Mammary epithelial cell (primary cell): ENCODE measurements at regions of chr1 and their contacts with region 1.

Region 1: DNA sequence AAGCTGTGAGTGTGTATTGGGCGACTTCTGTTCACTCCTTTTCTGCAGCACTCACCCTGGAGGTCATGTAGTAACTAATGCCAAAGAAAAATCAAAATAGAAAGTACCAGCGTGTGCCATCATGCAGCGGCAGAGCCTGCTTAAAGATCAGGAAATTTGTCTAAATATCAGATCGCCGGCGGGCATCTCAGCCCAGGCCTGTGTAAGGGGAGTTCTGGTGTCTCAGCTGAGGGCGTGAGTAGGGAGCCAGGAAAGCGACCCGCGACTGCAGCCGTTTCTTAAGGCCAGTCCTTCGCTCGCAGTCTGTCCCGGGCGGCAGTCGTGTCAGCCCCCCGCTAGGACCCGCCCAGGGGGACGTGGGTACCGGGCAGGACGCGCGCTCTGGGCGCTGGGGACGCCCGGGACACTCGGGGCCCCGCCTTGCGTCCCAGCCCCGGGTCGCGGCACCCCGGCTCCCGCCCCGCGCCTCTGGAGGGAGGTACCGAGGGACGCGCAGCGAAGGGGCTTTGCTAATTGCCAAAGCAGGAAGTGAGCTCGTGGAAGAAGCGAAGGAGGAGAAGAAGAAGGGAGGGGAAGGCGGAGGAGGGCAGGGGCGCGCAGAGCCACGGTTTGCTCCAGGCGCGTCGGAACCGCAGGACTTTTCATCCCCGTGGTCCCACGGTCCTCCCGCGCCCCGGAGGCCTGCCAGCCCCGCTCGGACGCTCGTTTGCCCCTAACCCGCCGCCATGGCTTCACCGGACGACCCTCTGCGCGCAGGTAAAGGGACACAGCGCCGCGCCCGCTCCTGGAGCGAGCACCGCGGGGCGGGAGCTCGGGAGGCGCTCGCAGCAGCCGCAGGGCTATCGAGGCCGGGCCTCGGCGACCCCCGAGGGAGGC is 1.1 kb downstream of the EDARADD start:
- DNase-seq: peak; percentile 72
- H3K4me3 ChIP-seq: peak overlapping the region; percentile 90 to 95 (median 94)
- H3K27ac ChIP-seq: peak overlapping the region; percentile 28
- H3K4me1 ChIP-seq: peaks cover 12% of the 10 kb centered on the region
- H3K27me3 ChIP-seq: no peaks in the 10 kb centered on the region
- CTCF ChIP-seq: no peak

Region 2: GRCh38 chr1:236142253-236143103 is 252.7 kb before region 1 on chr1 and contains the start of gene GPR137B:
- CTCF ChIA-PET with region 1: no interaction called
- dilution Hi-C with region 1: no loop called
- in situ Hi-C with region 1: no loop called
- intact Hi-C with region 1: loop called (anchors 5 kb)
- DNase-seq: peak; percentile 43
- H3K4me3 ChIP-seq: peak within 1 kb of the TSS; percentile 85 to 98 (median 88)
- H3K27ac ChIP-seq: peak within 1 kb of the TSS; percentile 45
- H3K4me1 ChIP-seq: peaks cover 22% of the 10 kb centered on the region
- H3K27me3 ChIP-seq: no peaks in the 10 kb centered on the region
- CTCF ChIP-seq: no peak
- total RNA-seq, gene GPR137B: 10.2 to 24.7 TPM

Region 3: GRCh38 chr1:236281654-236282424 is 113.3 kb before region 1 on chr1 and contains the start of gene ERO1B:
- CTCF ChIA-PET with region 1: no interaction called
- dilution Hi-C with region 1: no loop called
- in situ Hi-C with region 1: no loop called
- intact Hi-C with region 1: loop called (anchors 1 kb)
- DNase-seq: peak; percentile 93
- H3K4me3 ChIP-seq: peak within 1 kb of the TSS; percentile 54 to 90 (median 74)
- H3K27ac ChIP-seq: peak within 1 kb of the TSS; percentile 25
- H3K4me1 ChIP-seq: peaks cover 4% of the 10 kb centered on the region
- H3K27me3 ChIP-seq: no peaks in the 10 kb centered on the region
- CTCF ChIP-seq: peak in 1 of 2 donors; percentile 9
- total RNA-seq, gene ERO1B: 3.5 to 4.0 TPM

Region 4: GRCh38 chr1:236425031-236425663 is 30.0 kb after region 1 on chr1:
- CTCF ChIA-PET with region 1: no interaction called
- dilution Hi-C with region 1: no loop called
- in situ Hi-C with region 1: no loop called
- intact Hi-C with region 1: no loop called
- DNase-seq: no peak
- H3K4me3 ChIP-seq: no peak overlapping the region
- H3K27ac ChIP-seq: no peak overlapping the region
- H3K4me1 ChIP-seq: no peaks in the 10 kb centered on the region
- H3K27me3 ChIP-seq: no peaks in the 10 kb centered on the region
- CTCF ChIP-seq: no peak

Region 5: DNA sequence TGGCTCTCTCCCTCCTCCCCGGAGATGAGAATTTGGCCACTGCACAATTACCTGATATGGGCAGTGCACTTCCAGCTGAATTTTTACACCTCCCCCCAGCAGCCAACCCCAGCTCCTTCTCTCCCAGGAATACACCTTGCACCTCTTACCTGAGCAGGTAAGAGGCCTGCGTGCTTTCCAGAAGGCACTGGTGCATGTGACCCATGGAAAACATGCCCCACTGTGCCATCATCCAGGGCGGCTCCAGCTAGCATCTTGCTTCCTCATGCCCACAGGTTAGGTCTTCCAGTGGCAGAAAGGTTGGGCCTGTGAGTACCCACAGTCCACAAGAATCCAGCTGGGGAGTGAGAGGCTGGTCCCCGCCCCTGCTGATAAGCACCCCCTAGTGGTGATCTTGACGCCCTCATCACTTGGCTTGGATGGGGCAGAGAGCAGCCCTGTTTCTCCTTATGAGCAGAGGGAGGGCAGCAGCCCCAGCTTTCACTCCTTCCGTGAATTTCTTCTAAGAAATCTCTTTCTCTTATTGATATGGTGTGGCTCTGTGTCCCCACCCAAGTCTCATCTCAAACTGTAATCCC is 56.7 kb after region 1 on chr1:
- CTCF ChIA-PET with region 1: no interaction called
- dilution Hi-C with region 1: loop called (anchors 5 kb)
- in situ Hi-C with region 1: no loop called
- intact Hi-C with region 1: no loop called
- DNase-seq: peak; percentile 6
- H3K4me3 ChIP-seq: no peak overlapping the region
- H3K27ac ChIP-seq: no peak overlapping the region
- H3K4me1 ChIP-seq: peaks cover 2% of the 10 kb centered on the region
- H3K27me3 ChIP-seq: no peaks in the 10 kb centered on the region
- CTCF ChIP-seq: peak; percentile 34 to 54

Region 6: DNA sequence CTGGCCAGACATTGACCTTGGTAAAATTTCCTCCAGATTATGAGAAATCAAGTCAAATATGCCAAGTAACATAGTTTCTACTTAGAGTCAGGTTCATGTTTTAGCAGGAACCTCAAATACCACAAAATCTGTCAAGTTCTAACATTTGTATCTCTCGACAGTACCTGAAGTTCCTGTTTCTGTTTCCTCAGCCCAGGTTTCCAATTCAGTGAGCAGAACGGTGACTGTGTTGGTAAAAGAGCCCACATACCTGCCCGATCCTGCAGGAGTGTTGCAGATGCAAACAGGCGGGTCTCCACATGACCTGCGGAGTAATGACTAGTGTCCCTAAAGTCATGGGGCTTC is 70.8 kb after region 1 on chr1:
- CTCF ChIA-PET with region 1: no interaction called
- dilution Hi-C with region 1: no loop called
- in situ Hi-C with region 1: no loop called
- intact Hi-C with region 1: loop called (anchors 5 kb)
- DNase-seq: peak; percentile 94
- H3K4me3 ChIP-seq: peak overlapping the region in 1 of 3 experiments; percentile 5
- H3K27ac ChIP-seq: peak overlapping the region; percentile 8
- H3K4me1 ChIP-seq: peaks cover 21% of the 10 kb centered on the region
- H3K27me3 ChIP-seq: no peaks in the 10 kb centered on the region
- CTCF ChIP-seq: no peak

Region 7: GRCh38 chr1:236568285-236568894 is 173.2 kb after region 1 on chr1:
- CTCF ChIA-PET with region 1: interaction called, 12 read pairs
- dilution Hi-C with region 1: no loop called
- in situ Hi-C with region 1: no loop called
- intact Hi-C with region 1: no loop called
- DNase-seq: no peak
- H3K4me3 ChIP-seq: no peak overlapping the region
- H3K27ac ChIP-seq: no peak overlapping the region
- H3K4me1 ChIP-seq: no peaks in the 10 kb centered on the region
- H3K27me3 ChIP-seq: no peaks in the 10 kb centered on the region
- CTCF ChIP-seq: no peak

Region 8: DNA sequence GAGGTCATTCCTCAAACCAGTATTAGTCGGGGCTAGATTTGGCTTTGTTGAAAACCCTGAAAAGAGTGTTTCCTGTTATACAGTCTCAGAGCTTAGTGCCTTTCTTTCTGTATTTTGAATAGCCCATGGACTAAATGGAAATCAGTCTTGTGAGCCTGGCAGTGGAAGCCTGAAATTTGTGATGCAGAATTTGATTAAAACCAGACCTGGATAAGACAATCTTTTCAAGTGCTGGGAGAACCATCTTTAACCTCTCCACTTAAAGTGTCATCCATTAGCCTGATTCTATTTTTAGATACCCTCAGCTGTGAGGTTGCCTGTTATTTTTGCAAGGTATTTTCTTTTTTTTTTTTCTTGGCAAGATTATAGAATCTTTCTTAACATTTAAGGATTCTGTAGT is 310.6 kb after region 1 on chr1:
- CTCF ChIA-PET with region 1: no interaction called
- dilution Hi-C with region 1: no loop called
- in situ Hi-C with region 1: no loop called
- intact Hi-C with region 1: no loop called
- DNase-seq: no peak
- H3K4me3 ChIP-seq: no peak overlapping the region
- H3K27ac ChIP-seq: no peak overlapping the region
- H3K4me1 ChIP-seq: no peaks in the 10 kb centered on the region
- H3K27me3 ChIP-seq: peaks cover 7% of the 10 kb centered on the region
- CTCF ChIP-seq: no peak

Region 9: GRCh38 chr1:236716160-236716559 is 321.0 kb after region 1 on chr1:
- CTCF ChIA-PET with region 1: no interaction called
- dilution Hi-C with region 1: no loop called
- in situ Hi-C with region 1: no loop called
- intact Hi-C with region 1: no loop called
- DNase-seq: no peak
- H3K4me3 ChIP-seq: no peak overlapping the region
- H3K27ac ChIP-seq: no peak overlapping the region
- H3K4me1 ChIP-seq: no peaks in the 10 kb centered on the region
- H3K27me3 ChIP-seq: peaks cover 2% of the 10 kb centered on the region
- CTCF ChIP-seq: no peak